Right cardiac atrium (tissue), 5 donors: ENCODE measurements at regions of chr18 and their contacts with region 1.

Region 1: GRCh38 chr18:9951022-9951859 is 37.4 kb downstream of the VAPA start:
- DNase-seq: no peak
- ATAC-seq: peak; percentile 73 to 79
- H3K4me3 ChIP-seq: no peak overlapping the region
- H3K27ac ChIP-seq: no peak overlapping the region
- H3K4me1 ChIP-seq: no peaks in the 10 kb centered on the region
- H3K27me3 ChIP-seq: no peaks in the 10 kb centered on the region

Region 2: GRCh38 chr18:9614401-9615279 is 336.6 kb before region 1 on chr18 and contains the start of gene PPP4R1:
- intact Hi-C with region 1: no loop called
- DNase-seq: peak; percentile 85 to 93 (median 91)
- ATAC-seq: peak; percentile 75 to 84
- H3K4me3 ChIP-seq: peak within 1 kb of the TSS; percentile 99
- H3K27ac ChIP-seq: peak within 1 kb of the TSS; percentile 98
- H3K4me1 ChIP-seq: peaks cover 3% of the 10 kb centered on the region
- H3K27me3 ChIP-seq: no peaks in the 10 kb centered on the region
- total RNA-seq, gene PPP4R1: 56.9 to 95.8 (median 65.3) TPM

Region 3: DNA sequence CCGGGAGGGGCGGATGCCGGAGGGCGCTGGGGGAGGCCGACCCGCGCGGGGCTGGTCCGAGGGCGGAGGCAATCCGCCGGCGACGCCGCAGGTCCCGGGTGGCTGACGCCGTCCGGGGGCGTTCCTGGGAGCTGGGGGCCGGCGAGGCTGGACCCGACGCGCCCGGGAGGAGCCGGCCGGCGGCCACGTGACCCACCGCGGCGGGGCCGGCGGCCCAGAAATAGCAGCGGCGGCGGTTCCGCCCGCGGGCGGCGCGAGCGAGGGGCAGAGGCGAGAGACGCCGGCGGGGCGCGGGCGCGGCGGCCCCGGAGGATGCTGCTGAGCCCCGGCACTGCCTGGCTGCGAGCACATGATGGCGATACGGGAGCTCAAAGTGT is 243.2 kb before region 1 on chr18 and contains the start of gene RAB31:
- intact Hi-C with region 1: loop called in 1 of 4 experiments (anchors 10 kb)
- DNase-seq: peak; percentile 89 to 96 (median 95)
- ATAC-seq: peak; percentile 96 to 97
- H3K4me3 ChIP-seq: peak within 1 kb of the TSS; percentile 71
- H3K27ac ChIP-seq: peak within 1 kb of the TSS; percentile 40
- H3K4me1 ChIP-seq: no peaks in the 10 kb centered on the region
- H3K27me3 ChIP-seq: no peaks in the 10 kb centered on the region
- total RNA-seq, gene RAB31: 21.5 to 42.3 (median 26.0) TPM

Region 4: GRCh38 chr18:10072671-10073175 is 121.5 kb after region 1 on chr18:
- intact Hi-C with region 1: no loop called
- DNase-seq: no peak
- ATAC-seq: peak in 1 of 2 donors; percentile 38
- H3K4me3 ChIP-seq: no peak overlapping the region
- H3K27ac ChIP-seq: no peak overlapping the region
- H3K4me1 ChIP-seq: peaks cover 5% of the 10 kb centered on the region
- H3K27me3 ChIP-seq: no peaks in the 10 kb centered on the region